Activated CD8-positive, alpha-beta T cell treated with anti-CD3 and anti-CD28 coated beads, Interleukin-2, amount 10 ng/mL, durations not matched to agents 7 days and 5 days (primary cell): ENCODE measurements at regions of chrX and their contacts with region 1.

Region 1: DNA sequence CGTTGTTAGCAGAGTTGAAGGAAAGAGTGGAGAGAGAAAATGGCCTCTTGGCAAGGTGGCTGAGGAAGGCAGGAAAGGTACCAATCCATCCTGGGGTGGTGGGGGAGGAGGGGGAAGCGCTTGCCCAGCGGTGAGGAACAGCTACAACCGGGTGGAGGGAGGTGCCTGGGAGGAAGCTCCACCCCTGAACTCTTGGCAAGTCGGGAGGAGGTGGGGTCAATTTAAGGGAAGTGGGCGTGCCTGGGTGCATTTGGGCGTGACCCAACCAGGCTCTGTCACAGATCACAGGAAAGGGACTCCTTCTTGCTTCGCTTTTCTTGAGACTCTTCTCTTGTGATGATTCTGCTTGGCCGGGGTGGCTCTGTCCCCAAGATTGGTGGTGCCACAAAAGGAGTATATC is 41.7 kb downstream of the BCORL1 start:
- DNase-seq: peak; percentile 91
- ATAC-seq: peak; percentile 100
- H3K4me3 Mint-ChIP-seq: peak overlapping the region; percentile 45
- H3K27ac Mint-ChIP-seq: peak overlapping the region; percentile 72
- H3K4me1 Mint-ChIP-seq: peaks cover 13% of the 10 kb centered on the region
- H3K27me3 Mint-ChIP-seq: no peaks in the 10 kb centered on the region

Region 2: DNA sequence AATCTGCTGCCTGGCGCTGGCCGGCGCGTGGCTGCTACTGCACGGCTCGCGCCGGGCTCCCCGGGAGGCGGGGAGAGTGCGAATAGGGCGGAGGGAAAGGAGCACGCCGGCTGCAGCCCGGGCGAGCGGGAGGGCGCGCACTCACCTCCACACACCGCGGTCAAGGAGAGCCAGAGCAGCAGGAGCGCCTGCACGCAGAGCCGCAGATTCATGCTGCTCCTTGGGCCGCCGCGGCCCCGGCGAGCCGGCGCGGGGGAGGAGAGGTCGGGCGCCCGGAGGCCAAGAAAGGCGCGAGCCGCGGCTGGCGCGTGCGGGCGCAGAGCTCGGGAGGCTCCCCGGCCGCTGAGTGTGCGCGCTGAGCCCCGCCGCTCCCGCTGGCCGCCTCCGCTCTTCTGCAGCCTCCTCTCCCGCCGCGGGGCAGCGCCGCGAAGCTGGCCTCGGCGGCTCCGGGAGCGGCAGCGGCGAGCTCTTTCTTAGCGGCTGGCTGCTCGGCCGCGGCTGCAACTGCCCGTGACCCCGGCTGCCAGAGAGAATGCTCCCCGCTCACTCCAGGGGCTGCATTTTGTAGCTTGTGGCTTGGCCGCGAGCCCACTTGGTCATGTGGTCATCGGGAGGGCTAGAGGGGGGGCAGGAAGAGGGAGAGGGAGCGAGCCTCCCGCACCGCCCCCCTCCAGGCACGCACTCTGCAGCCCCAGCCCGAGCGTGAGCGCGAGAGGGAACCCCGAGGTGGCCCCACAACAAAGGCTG is 369.5 kb before region 1 on chrX and contains the start of gene APLN:
- CTCF ChIA-PET with region 1: no interaction called
- POLR2A ChIA-PET with region 1: no interaction called
- DNase-seq: peak; percentile 26
- ATAC-seq: peak; percentile 79
- H3K4me3 Mint-ChIP-seq: peak within 1 kb of the TSS; percentile 66
- H3K27ac Mint-ChIP-seq: no peak within 1 kb of the TSS
- H3K4me1 Mint-ChIP-seq: peaks cover 7% of the 10 kb centered on the region
- H3K27me3 Mint-ChIP-seq: peaks cover 9% of the 10 kb centered on the region
- total RNA-seq, gene APLN: 2.1 to 2.7 TPM

Region 3: GRCh38 chrX:129925305-129926092 is 98.6 kb before region 1 on chrX:
- CTCF ChIA-PET with region 1: interaction called, 148 read pairs
- POLR2A ChIA-PET with region 1: no interaction called
- DNase-seq: peak; percentile 80
- ATAC-seq: peak; percentile 75
- H3K4me3 Mint-ChIP-seq: no peak overlapping the region
- H3K27ac Mint-ChIP-seq: no peak overlapping the region
- H3K4me1 Mint-ChIP-seq: peaks cover 4% of the 10 kb centered on the region
- H3K27me3 Mint-ChIP-seq: no peaks in the 10 kb centered on the region

Region 4: DNA sequence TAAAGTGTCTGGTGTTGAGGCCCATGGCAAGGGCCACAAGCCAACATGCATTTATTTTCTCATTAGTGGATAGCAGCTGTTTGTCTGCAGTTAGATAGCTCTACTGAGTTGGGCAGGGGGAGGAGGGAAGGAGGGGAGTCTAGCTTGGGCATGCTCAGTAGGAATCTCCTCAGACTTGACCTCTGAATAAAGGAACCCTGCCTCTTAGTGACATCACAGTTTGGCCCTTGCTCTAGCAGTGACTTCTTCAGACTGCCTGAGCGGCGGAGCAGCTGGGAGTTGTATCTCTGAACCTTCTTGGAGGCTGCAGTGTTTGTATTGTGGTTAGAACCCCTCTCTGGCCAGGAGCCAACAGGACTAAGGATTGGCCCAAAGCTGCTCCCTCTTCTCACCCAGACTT is 15.7 kb after region 1 on chrX:
- CTCF ChIA-PET with region 1: interaction called, 10 read pairs
- POLR2A ChIA-PET with region 1: no interaction called
- DNase-seq: no peak
- ATAC-seq: no peak
- H3K4me3 Mint-ChIP-seq: no peak overlapping the region
- H3K27ac Mint-ChIP-seq: no peak overlapping the region
- H3K4me1 Mint-ChIP-seq: no peaks in the 10 kb centered on the region
- H3K27me3 Mint-ChIP-seq: no peaks in the 10 kb centered on the region